ENCODE measurements at regions of chr5 and their contacts with region 1.

Region 1: DNA sequence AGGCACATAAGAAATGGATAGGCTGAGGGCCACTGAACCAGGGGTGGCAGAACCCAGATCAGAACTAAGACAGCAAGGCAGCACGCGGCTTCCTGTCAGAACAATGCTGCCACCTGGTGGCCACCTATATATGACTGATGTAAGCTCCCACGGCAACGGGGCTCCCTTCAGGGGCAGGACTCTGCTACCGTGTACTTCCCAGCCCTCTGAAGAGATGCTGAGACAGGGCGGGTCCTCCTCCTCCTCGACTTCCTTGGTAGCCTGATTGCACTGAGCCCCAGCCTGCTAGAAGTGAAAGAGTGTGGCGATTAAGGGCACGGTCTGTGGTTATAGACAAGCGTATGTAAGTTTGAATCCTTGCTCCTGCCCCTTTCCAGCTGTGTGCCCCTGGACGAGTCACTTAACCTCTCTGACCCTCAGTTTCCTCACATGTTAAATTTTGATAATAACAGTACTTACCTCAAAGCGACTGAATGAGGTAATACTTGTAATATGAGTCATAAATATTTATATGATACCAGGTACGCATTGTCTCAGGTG is 13.3 kb downstream of the RPS14 start:
- DNase-seq: peak; percentile 87
- H3K4me3 ChIP-seq: peak overlapping the region in 1 of 2 experiments; percentile 28; a peak in 1 of 4 replicates
- H3K27ac ChIP-seq: no peak overlapping the region
- H3K4me1 ChIP-seq: no peaks in the 10 kb centered on the region; a peak in 1 of 4 replicates
- H3K27me3 ChIP-seq: no peaks in the 10 kb centered on the region
- CTCF ChIP-seq: peak; percentile 83
- EP300 ChIP-seq: no peak
- RAD21 ChIP-seq: peak; percentile 85

Region 2: DNA sequence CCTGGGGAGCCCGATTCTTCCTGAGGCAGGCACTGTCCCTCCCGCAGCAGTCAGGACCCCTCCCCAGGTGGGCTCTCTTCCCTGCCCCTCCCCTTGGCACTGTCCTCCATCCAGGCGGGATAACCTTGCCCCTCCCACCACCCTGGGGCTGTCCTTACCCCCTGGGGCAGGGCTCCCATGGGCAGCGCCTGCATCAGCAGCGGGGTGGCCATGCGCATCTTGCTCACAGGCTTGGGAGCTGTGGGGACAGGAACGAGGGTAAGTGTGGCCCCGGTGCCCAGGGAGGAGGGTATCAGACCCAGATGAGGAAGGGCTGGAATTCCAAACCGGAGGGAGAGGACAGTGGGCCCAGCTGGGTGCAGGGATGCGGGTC is 29.5 kb before region 1 on chr5:
- CTCF ChIA-PET with region 1: interaction called, 11 read pairs
- POLR2A ChIA-PET with region 1: no interaction called
- DNase-seq: no peak
- H3K4me3 ChIP-seq: no peak overlapping the region
- H3K27ac ChIP-seq: no peak overlapping the region
- H3K4me1 ChIP-seq: peaks cover 4 to 8% of the 10 kb centered on the region in 2 experiments; a peak in 3 of 4 replicates
- H3K27me3 ChIP-seq: no peaks in the 10 kb centered on the region
- CTCF ChIP-seq: no peak
- EP300 ChIP-seq: no peak
- RAD21 ChIP-seq: no peak

Region 3: DNA sequence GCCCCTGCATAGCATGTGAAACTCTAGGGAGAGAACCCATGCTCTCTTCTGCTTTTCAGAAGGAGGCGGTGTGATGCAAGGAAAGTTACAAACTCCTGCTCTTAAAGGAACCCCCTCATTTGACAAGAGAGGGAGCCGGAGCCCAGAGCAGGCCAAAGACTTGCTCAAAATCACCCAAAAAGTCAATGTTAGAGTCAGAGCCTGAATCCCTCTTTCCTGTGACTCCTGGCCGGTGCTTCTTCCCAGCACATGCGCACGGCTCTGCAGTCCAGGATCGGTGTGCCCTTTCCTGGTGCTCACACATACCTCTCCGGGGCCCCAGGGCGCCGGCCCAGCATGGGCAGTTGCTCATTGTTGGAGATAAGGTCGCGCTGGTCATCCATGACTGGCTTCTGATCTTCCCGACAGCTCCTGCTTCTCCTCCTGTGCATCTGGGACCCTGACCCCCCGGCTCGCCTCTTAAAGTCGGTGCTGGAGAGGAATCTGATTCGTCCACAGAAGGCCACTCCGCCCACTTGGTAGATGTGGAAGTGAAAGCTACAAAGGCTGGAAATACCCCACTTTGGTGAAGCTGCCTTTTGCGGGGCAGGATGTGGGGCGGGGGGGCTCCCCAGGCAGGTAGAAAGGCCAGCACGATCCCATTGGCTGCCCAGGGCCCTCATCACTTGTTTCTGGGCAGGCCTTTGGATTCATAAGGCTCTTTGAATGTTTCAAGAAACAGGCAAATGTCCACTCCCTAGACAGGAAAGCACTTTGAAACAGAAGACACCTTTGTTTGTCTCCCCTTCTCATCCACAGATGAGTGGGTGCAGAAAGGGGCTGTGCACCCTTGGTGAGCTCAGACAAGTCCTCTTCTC is 23.7 kb before region 1 on chr5 and contains the start of gene CD74:
- CTCF ChIA-PET with region 1: interaction called, 10 read pairs
- POLR2A ChIA-PET with region 1: no interaction called
- DNase-seq: peak; percentile 53
- H3K4me3 ChIP-seq: no peak within 1 kb of the TSS
- H3K27ac ChIP-seq: no peak within 1 kb of the TSS
- H3K4me1 ChIP-seq: peaks cover 4 to 8% of the 10 kb centered on the region in 2 experiments; a peak in 3 of 4 replicates
- H3K27me3 ChIP-seq: no peaks in the 10 kb centered on the region
- CTCF ChIP-seq: no peak
- EP300 ChIP-seq: no peak
- RAD21 ChIP-seq: no peak
- polyA plus RNA-seq, gene CD74: 0.15 and 0.26 TPM in 2 replicates

Region 4: DNA sequence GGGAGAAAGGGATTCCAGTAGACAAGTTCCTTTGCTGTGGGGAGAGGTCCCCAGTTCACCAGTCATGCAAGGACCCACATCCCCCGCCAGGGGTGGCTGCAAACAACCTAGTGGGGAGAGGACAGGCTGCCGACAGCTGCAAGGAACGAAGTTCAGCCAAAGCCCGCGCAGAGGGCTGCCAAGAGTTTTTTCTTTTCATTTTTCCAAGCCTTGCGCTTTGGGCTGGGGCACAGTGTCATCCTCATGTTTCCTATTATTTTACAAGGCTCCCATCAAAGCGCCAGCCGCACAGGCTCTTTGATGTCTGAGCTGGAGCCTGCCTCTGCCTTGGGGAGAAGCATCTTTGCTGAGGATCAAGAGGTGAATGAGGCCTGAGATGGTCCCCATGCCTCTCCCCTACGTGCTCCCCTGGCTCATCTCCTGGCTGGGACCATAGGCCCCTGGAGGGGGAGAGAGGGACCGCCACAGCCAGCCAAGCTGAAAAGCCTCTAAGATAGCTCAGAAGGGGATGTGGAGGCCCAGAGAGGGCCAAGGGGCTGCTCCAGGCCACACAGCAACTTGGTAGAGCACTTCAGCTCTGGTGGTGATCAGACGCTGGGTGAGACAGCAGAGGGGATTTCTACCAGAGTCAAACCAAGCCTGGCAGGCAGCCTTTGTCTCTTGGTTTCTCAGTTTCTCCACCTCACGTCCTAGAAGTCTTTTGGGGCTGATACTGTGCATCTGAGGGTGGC is 153.8 kb after region 1 on chr5:
- CTCF ChIA-PET with region 1: no interaction called
- POLR2A ChIA-PET with region 1: no interaction called
- DNase-seq: peak; percentile 58
- H3K4me3 ChIP-seq: no peak overlapping the region
- H3K27ac ChIP-seq: peak overlapping the region; percentile 41 to 93
- H3K4me1 ChIP-seq: peaks cover 11 to 68% of the 10 kb centered on the region in 2 experiments; a peak in 3 of 4 replicates
- H3K27me3 ChIP-seq: no peaks in the 10 kb centered on the region
- CTCF ChIP-seq: peak; percentile 54
- EP300 ChIP-seq: peak in 1 of 2 experiments; percentile 3; a peak in 1 of 4 replicates
- RAD21 ChIP-seq: peak; percentile 59

Region 5: GRCh38 chr5:150615141-150615699 is 179.0 kb after region 1 on chr5:
- CTCF ChIA-PET with region 1: no interaction called
- POLR2A ChIA-PET with region 1: no interaction called
- DNase-seq: no peak
- H3K4me3 ChIP-seq: no peak overlapping the region
- H3K27ac ChIP-seq: peak overlapping the region in 1 of 2 experiments; percentile 86; a peak in 2 of 4 replicates
- H3K4me1 ChIP-seq: peaks cover 0 to 82% of the 10 kb centered on the region in 2 experiments; a peak in 3 of 4 replicates
- H3K27me3 ChIP-seq: no peaks in the 10 kb centered on the region
- CTCF ChIP-seq: no peak
- EP300 ChIP-seq: no peak
- RAD21 ChIP-seq: no peak